Activated T-helper 2 cell treated with anti-CD3 and anti-CD28 coated beads, Interferon-gamma antibody, Interleukin-2, Interleukin-4, amounts not matched to agents 10 μg/mL and 5 μg/mL and 100 μg/mL, durations not matched to agents 14 hours and 24 hours and 36 hours (primary cell): ENCODE measurements at regions of chr15 and their contacts with region 1.

Region 1: DNA sequence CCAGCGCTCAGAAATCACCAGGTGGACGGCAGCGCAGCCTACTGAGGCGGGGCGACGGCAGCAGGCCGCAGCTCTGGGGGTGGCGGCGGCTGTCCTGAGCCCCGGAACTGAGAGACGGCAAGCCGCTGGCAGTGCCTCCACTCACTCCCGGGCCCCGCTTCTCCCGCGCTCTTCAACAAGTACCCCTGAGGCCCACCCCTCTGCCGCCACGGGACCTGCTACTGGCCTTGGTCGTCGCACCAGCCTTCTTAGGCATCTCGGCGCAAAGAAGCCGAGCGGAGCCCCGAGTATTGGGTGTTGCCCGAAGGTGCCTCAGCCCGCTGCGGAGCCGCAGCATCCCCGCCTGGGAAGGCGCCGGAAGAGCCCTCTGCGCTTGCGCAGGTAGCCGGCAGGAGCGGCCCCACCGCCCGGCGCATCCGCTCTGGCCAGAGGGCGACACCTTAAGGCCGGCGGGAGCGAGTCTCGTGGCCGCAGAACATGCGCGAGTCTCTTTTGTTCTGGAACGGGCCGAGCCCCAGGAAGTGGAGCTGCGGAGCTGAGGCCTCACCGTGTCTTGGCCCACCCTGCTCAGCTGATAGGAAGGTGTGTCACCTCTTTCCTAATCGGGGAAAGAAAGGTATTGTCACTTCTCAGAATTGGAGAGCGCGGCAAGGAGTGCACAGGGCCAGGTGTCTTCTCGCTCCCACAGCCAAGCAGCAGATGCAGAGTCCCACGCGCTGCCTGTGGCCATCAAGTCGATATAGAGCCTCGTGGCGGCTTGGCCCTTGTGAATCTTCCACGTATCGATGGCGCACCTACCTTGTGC is at the start of gene C15orf40:
- DNase-seq: peak; percentile 82
- H3K4me3 Mint-ChIP-seq: peak within 1 kb of the TSS; percentile 88
- H3K27ac Mint-ChIP-seq: peak within 1 kb of the TSS; percentile 87
- H3K4me1 Mint-ChIP-seq: peaks cover 40% of the 10 kb centered on the region
- H3K27me3 Mint-ChIP-seq: no peaks in the 10 kb centered on the region
- total RNA-seq, gene C15orf40: 22.1 and 24.4 TPM in 2 replicates

Region 2: GRCh38 chr15:82540055-82540983 is 471.2 kb before region 1 on chr15 and contains the start of gene RPS17:
- intact Hi-C with region 1: loop called (anchors 10 kb)
- DNase-seq: peak; percentile 98
- H3K4me3 Mint-ChIP-seq: peak within 1 kb of the TSS; percentile 95
- H3K27ac Mint-ChIP-seq: peak within 1 kb of the TSS; percentile 88
- H3K4me1 Mint-ChIP-seq: peaks cover 21% of the 10 kb centered on the region
- H3K27me3 Mint-ChIP-seq: peaks cover 3% of the 10 kb centered on the region
- total RNA-seq, gene RPS17: 2,500 and 2,516 TPM in 2 replicates

Region 3: GRCh38 chr15:82749951-82750830 is 261.3 kb before region 1 on chr15:
- intact Hi-C with region 1: loop called (anchors 5 kb)
- DNase-seq: peak; percentile 75
- H3K4me3 Mint-ChIP-seq: peak overlapping the region; percentile 100
- H3K27ac Mint-ChIP-seq: peak overlapping the region; percentile 99
- H3K4me1 Mint-ChIP-seq: peaks cover 28% of the 10 kb centered on the region
- H3K27me3 Mint-ChIP-seq: no peaks in the 10 kb centered on the region

Region 4: GRCh38 chr15:82832601-82833361 is 178.7 kb before region 1 on chr15:
- intact Hi-C with region 1: loop called (anchors 5 kb)
- DNase-seq: peak; percentile 30
- H3K4me3 Mint-ChIP-seq: peak overlapping the region; percentile 49
- H3K27ac Mint-ChIP-seq: peak overlapping the region; percentile 91
- H3K4me1 Mint-ChIP-seq: peaks cover 46% of the 10 kb centered on the region
- H3K27me3 Mint-ChIP-seq: no peaks in the 10 kb centered on the region

Region 5: GRCh38 chr15:82966671-82967071 is 44.8 kb before region 1 on chr15:
- intact Hi-C with region 1: no loop called
- DNase-seq: peak; percentile 20
- H3K4me3 Mint-ChIP-seq: no peak overlapping the region
- H3K27ac Mint-ChIP-seq: no peak overlapping the region
- H3K4me1 Mint-ChIP-seq: peaks cover 30% of the 10 kb centered on the region
- H3K27me3 Mint-ChIP-seq: peaks cover 10% of the 10 kb centered on the region

Region 6: DNA sequence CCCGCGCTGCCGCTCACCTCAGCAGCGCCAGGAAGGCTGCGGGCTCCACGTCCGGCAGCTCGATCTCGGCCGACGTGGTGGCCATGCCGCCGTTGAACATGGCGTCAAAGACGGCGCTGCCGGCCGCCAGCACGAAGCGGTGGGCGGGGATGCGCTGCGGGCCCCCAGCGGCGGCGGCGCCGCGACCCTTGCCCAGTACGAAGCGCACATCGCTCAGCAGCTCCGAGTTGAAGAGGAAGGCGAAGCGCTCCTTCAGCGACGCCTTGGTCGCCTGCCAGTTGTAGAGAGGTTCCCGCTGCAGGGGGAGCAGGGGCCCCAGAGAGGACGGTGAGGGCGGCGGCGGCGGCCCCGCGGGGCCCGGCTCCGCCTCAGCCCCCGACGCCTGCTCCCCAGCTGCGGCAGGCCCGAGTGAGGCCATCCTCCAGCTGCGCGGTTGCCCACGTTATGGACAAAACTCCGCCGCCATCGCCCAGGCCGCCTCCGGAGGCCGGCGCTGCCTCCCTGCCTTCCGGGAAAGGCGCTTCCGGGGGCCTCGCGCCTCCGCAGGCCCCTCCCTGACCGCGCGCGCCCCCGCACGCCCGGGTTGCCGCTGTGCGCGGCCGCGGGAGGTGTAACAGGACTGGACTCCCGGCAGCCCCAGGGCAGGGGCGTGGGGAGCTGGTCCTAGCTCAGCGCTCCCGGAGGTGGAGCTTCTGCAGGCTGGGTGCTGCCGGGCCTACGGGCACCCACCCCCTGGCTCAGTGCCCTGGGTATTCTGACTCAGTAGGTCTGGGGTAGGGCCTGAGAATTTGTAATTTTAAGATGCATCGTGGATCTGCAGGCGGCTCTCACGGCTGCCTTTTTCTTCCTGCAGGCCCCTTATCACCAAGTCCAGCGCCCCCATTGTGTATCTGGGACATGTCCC is 55.5 kb after region 1 on chr15 and contains the start of gene BTBD1:
- intact Hi-C with region 1: loop called (anchors 1 kb)
- DNase-seq: peak; percentile 80
- H3K4me3 Mint-ChIP-seq: peak within 1 kb of the TSS; percentile 81
- H3K27ac Mint-ChIP-seq: peak within 1 kb of the TSS; percentile 72
- H3K4me1 Mint-ChIP-seq: peaks cover 20% of the 10 kb centered on the region
- H3K27me3 Mint-ChIP-seq: no peaks in the 10 kb centered on the region
- total RNA-seq, gene BTBD1: 56.8 and 59.5 TPM in 2 replicates

Region 7: GRCh38 chr15:83077491-83078230 is 66.2 kb after region 1 on chr15:
- intact Hi-C with region 1: no loop called
- DNase-seq: no peak
- H3K4me3 Mint-ChIP-seq: no peak overlapping the region
- H3K27ac Mint-ChIP-seq: no peak overlapping the region
- H3K4me1 Mint-ChIP-seq: peaks cover 5% of the 10 kb centered on the region
- H3K27me3 Mint-ChIP-seq: peaks cover 34% of the 10 kb centered on the region

Region 8: DNA sequence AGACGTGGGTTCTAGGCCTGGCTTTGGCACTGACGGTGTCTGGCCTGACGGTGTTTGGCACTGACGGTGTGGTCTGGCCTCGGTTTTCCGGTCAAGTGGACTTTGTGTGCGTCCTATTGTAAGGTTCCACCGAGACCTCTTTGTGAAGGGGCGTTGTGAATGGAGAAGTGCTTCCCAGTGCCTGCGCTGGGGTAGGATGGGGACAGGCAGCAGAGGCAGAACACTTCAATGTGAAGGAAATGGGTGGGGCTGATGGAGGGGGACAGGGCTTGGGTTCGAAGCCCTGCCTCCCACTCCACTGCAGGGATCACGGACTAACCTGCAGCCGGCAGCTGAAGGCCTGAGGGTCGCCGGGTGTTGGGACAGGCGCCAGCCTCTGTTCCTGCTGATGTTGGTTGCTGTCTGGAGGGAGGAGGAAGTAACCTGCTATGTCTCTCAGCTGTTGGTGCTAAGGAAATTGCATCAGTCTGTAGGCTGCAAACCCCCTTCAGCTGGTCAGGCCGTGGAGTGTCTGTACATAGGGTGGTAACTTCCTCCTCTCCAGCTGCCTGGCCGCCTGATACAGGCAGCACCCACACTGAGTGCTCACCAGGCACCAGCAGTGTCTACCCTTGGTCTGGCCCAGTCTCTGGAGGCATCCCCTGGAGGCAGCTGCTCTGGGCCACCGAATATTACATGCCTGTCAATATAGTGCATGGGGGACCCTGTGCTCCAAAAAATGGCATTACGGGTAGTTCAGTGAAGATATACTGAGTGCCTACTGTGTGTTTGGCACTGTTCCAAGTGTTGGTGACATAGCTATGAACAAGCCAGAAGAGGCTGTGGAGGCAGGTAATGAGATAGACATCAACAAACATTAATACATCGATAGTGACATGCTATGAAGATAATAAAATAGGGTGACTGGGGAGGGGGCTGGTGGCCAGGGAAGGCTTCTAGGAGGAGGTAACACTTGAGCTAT is 97.1 kb after region 1 on chr15:
- intact Hi-C with region 1: loop called (anchors 5 kb)
- DNase-seq: peak; percentile 27
- H3K4me3 Mint-ChIP-seq: peak overlapping the region; percentile 82
- H3K27ac Mint-ChIP-seq: peak overlapping the region; percentile 25
- H3K4me1 Mint-ChIP-seq: peaks cover 24% of the 10 kb centered on the region
- H3K27me3 Mint-ChIP-seq: peaks cover 15% of the 10 kb centered on the region

Region 9: GRCh38 chr15:83207622-83208411 is 196.3 kb after region 1 on chr15 and contains the start of gene HDGFL3:
- intact Hi-C with region 1: loop called (anchors 2 kb)
- DNase-seq: peak; percentile 13
- H3K4me3 Mint-ChIP-seq: peak within 1 kb of the TSS; percentile 87
- H3K27ac Mint-ChIP-seq: peak within 1 kb of the TSS; percentile 20
- H3K4me1 Mint-ChIP-seq: peaks cover 6% of the 10 kb centered on the region
- H3K27me3 Mint-ChIP-seq: peaks cover 36% of the 10 kb centered on the region
- total RNA-seq, gene HDGFL3: 19.1 TPM in 2 replicates